Vagina (tissue), 2 donors: ENCODE measurements at regions of chr21 and their contacts with region 1.

Region 1: GRCh38 chr21:34745557-34746255 is 76.9 kb downstream of the CLIC6 start:
- DNase-seq: no peak
- H3K4me3 ChIP-seq: no peak overlapping the region
- H3K27ac ChIP-seq: no peak overlapping the region
- H3K4me1 ChIP-seq: peaks cover 21% of the 10 kb centered on the region
- H3K27me3 ChIP-seq: no peaks in the 10 kb centered on the region
- CTCF ChIP-seq: peak; percentile 62 to 87 (median 70)
- POLR2A ChIP-seq: no peak

Region 2: GRCh38 chr21:36028127-36029069 is 1282.7 kb after region 1 on chr21:
- intact Hi-C with region 1: loop called (anchors 10 kb)
- DNase-seq: no peak
- H3K4me3 ChIP-seq: no peak overlapping the region
- H3K27ac ChIP-seq: no peak overlapping the region
- H3K4me1 ChIP-seq: peaks cover 2% of the 10 kb centered on the region
- H3K27me3 ChIP-seq: no peaks in the 10 kb centered on the region
- CTCF ChIP-seq: peak; percentile 59 to 89 (median 67)
- POLR2A ChIP-seq: no peak